PC-3 (cell line): ENCODE measurements at regions of chr5 and their contacts with region 1.

Region 1: DNA sequence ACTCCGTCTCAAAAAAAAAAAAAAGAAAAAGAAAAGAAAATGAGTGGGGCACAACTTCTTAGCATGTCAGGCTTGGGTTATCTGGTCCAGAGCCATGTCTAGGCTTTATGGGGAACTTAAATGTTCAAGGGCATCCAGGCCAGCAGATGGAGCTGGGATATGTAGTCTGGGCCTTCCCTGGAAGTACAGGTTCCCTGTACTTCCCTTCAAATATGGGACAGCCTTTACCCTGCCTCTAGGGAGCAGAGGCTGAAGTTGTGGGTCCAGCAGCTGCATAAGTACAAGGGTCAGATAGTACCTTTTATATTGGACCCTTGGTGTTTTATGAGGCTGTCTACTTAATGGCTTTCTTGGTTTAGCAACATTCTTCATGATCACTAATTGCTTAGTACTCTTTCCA is 42.1 kb downstream of the FAF2 start:
- DNase-seq: peak; percentile 44
- ATAC-seq: peak; percentile 21
- H3K4me3 ChIP-seq: peak overlapping the region; percentile 12; the same call in 1 of the 2 replicates
- H3K27ac ChIP-seq: peak overlapping the region; percentile 65
- H3K4me1 ChIP-seq: peaks cover 47% of the 10 kb centered on the region
- H3K27me3 ChIP-seq: no peaks in the 10 kb centered on the region
- CTCF ChIP-seq: peak; percentile 40

Region 2: GRCh38 chr5:176415952-176416924 is 74.1 kb before region 1 on chr5 and contains the start of gene CLTB:
- CTCF ChIA-PET with region 1: no interaction called
- POLR2A ChIA-PET with region 1: no interaction called
- intact Hi-C with region 1: loop called (anchors 1 kb)
- DNase-seq: peak; percentile 93
- ATAC-seq: peak; percentile 83
- H3K4me3 ChIP-seq: peak within 1 kb of the TSS; percentile 94
- H3K27ac ChIP-seq: peak within 1 kb of the TSS; percentile 69
- H3K4me1 ChIP-seq: peaks cover 59% of the 10 kb centered on the region
- H3K27me3 ChIP-seq: no peaks in the 10 kb centered on the region
- CTCF ChIP-seq: peak; percentile 58
- total RNA-seq, gene CLTB: 354 and 460 TPM in 2 replicates

Region 3: GRCh38 chr5:176473335-176474006 is 16.8 kb before region 1 on chr5:
- CTCF ChIA-PET with region 1: no interaction called
- POLR2A ChIA-PET with region 1: no interaction called
- intact Hi-C with region 1: loop called (anchors 2 kb)
- DNase-seq: peak; percentile 24
- ATAC-seq: peak; percentile 54
- H3K4me3 ChIP-seq: no peak overlapping the region
- H3K27ac ChIP-seq: no peak overlapping the region
- H3K4me1 ChIP-seq: peaks cover 22% of the 10 kb centered on the region
- H3K27me3 ChIP-seq: no peaks in the 10 kb centered on the region
- CTCF ChIP-seq: no peak